ENCODE measurements at regions of chr17 and their contacts with region 1.

Region 1: GRCh38 chr17:37791447-37792399 is 46.9 kb upstream of the HNF1B start:
- DNase-seq: peak; percentile 51
- ATAC-seq: no peak; the same call in 1 of the 2 replicates
- H3K4me3 ChIP-seq: no peak overlapping the region
- H3K27ac ChIP-seq: no peak overlapping the region
- H3K4me1 ChIP-seq: peaks cover 15% of the 10 kb centered on the region
- H3K27me3 ChIP-seq: no peaks in the 10 kb centered on the region
- CTCF ChIP-seq: peak; percentile 42
- POLR2A ChIP-seq: no peak
- RAD21 ChIP-seq: peak; percentile 19; the same call in 1 of the 2 replicates

Region 2: DNA sequence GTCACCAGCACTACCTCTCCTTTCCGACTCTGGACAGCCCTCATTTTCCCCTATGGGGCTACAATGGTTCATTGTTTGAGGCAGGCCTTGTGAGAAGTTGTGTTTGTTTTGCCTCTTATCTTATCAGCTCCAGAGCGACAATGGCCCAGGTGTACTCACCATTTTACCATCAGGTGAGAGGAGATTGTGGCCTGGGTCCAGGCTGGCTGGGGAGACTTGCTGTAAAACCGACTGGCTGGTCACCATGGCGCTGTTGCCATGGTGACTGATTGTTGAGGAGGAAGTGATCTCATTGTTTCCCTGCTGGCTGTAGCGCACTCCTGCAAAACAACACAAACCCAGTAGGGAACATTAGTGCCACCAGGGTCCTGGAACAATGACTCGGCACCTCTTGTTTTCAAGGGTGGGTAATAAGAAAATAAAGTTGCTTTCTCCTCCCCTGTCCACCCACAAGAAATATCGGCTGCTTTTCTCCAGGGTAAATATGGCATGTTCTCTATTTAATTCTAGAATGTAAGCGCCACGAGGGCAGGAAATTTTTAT is 81.3 kb before region 1 on chr17:
- CTCF ChIA-PET with region 1: no interaction called
- POLR2A ChIA-PET with region 1: no interaction called
- dilution Hi-C with region 1: no loop called
- in situ Hi-C with region 1: no loop called
- intact Hi-C with region 1: loop called (anchors 10 kb)
- DNase-seq: peak; percentile 62
- ATAC-seq: no peak
- H3K4me3 ChIP-seq: no peak overlapping the region
- H3K27ac ChIP-seq: no peak overlapping the region
- H3K4me1 ChIP-seq: no peaks in the 10 kb centered on the region; the same call in 1 of the 2 replicates
- H3K27me3 ChIP-seq: peaks cover 9% of the 10 kb centered on the region
- CTCF ChIP-seq: no peak
- POLR2A ChIP-seq: no peak
- RAD21 ChIP-seq: no peak